ENCODE measurements at regions of chr19 and their contacts with region 1.

Region 1: DNA sequence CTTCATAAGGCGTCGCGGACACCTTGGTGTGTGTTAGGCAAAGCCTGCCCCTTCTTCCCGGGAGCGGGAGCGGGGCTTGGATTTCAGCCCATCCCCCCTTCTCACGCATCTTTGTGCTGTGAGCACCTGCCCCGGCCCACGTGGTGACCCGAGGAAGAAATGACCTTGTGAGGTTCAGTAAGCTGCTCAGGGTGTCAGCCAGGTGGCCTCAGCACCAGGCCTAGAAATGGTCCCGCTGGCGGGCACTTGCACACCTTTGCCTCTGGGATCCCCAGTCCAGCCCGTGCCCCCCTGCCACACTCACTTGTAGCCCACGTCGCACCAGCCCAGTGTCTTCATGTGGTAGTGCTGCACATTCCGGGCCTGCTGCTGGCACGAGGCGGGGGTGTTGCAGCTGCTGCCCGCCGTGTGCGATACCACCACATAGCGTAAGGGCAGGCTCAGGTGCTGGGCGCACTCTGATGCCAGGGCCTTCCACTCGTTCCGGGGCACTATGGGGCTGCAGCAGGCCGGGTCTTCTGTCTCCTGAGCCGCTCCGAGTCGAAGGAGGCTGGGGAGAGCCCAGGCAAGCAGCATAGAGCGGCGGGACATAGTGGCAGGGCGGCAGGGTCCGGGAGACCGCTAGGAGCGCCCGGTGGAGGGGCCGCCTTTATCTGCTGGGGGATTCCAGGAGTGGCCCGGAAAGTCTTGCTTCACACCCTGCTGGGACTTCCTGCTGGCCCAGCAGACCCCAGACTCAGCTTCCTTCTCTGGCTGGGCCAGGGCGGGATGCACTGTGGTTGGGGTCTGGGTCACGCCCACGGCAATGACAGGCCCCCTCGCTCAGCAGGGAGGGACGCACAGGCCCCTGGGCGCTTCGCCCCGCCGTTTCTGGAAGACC is at the start of gene PGLYRP1:
- DNase-seq: no peak
- H3K4me3 ChIP-seq: no peak within 1 kb of the TSS
- H3K27ac ChIP-seq: no peak within 1 kb of the TSS
- H3K27me3 ChIP-seq: peaks cover 23% of the 10 kb centered on the region
- CTCF ChIP-seq: no peak
- polyA plus RNA-seq, gene PGLYRP1: not detected in 2 replicates

Region 2: GRCh38 chr19:45985321-45985720 is 37.4 kb before region 1 on chr19:
- CTCF ChIA-PET with region 1: no interaction called
- POLR2A ChIA-PET with region 1: no interaction called
- DNase-seq: no peak
- H3K4me3 ChIP-seq: no peak overlapping the region
- H3K27ac ChIP-seq: no peak overlapping the region
- H3K27me3 ChIP-seq: peaks cover 16% of the 10 kb centered on the region
- CTCF ChIP-seq: no peak

Region 3: GRCh38 chr19:46040952-46041500 is 18.4 kb after region 1 on chr19 and contains the start of gene IGFL4:
- CTCF ChIA-PET with region 1: interaction called, 16 read pairs
- POLR2A ChIA-PET with region 1: no interaction called
- DNase-seq: no peak
- H3K4me3 ChIP-seq: no peak within 1 kb of the TSS
- H3K27ac ChIP-seq: no peak within 1 kb of the TSS
- H3K27me3 ChIP-seq: peaks cover 52% of the 10 kb centered on the region
- CTCF ChIP-seq: no peak
- polyA plus RNA-seq, gene IGFL4: not detected in 2 replicates

Region 4: DNA sequence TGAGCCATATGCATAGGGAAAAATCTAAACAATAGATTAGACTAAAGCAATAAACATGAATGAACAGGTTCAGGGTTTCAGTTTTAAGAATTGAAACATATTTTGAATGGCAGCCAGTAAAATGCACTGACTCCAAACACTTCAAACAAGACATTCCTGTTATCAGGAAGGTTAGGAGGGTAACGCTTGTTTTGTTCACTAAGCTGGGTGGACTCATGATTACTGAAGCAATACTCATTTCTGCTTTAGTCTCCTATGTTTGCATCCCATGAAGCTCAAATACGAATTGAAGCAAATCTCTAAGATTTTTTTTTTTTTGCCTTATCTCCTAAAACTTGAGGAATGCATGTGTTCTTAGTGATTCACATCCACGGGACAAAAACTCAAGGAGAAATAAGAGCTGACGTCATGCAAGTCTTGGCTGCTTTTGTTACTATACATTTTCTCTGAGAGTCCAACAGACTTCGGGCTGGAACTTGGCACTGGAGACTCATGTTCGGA is 47.2 kb after region 1 on chr19:
- CTCF ChIA-PET with region 1: interaction called, 29 read pairs
- POLR2A ChIA-PET with region 1: no interaction called
- DNase-seq: peak; percentile 74
- H3K4me3 ChIP-seq: no peak overlapping the region
- H3K27ac ChIP-seq: peak overlapping the region; percentile 57
- H3K27me3 ChIP-seq: peaks cover 38% of the 10 kb centered on the region
- CTCF ChIP-seq: no peak

Region 5: DNA sequence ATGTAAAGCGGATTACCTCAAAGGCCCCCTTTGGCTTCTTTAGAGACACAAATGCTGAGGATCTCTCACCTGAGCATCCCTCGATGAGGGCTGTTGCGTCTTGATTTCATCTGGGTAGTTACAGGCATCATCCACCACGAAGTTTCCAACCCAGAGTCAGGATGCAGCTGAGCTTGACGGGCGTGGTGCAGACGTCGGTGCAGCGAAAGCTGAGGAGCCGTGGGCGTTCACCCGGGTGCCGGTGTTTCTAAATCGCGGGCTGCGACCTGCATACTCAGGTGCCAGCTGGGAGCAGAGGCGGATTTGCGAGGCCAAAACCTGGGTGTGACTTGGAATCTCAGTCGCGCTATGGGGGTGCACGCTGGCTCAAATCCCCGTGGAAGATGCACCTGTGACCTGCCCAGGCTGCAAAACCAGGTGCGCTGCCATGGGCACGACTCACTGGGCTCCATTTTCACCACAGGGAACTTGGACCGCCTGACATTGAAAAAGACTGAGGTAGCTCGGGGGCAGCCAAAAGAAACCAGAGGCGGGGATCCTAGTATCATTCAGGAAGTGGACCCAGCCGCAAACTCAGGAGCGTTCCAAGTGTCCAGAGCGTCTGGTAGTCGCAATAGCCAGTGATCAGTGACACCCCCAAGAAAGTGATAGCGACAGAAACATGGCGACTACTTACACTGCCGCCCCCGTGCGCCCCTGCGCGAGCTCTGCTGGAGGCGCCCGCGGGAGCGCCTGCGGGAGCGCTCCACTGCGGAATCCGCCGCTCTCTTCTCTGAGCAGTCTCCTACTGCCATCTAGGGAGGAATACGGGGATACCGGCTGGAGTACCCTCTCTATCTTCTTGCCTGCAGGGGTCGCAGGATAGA is 54.5 kb after region 1 on chr19:
- CTCF ChIA-PET with region 1: interaction called, 196 read pairs
- POLR2A ChIA-PET with region 1: no interaction called
- DNase-seq: peak; percentile 56
- H3K4me3 ChIP-seq: peak overlapping the region; percentile 44
- H3K27ac ChIP-seq: no peak overlapping the region
- H3K27me3 ChIP-seq: peaks cover 53% of the 10 kb centered on the region
- CTCF ChIP-seq: peak; percentile 100

Region 6: DNA sequence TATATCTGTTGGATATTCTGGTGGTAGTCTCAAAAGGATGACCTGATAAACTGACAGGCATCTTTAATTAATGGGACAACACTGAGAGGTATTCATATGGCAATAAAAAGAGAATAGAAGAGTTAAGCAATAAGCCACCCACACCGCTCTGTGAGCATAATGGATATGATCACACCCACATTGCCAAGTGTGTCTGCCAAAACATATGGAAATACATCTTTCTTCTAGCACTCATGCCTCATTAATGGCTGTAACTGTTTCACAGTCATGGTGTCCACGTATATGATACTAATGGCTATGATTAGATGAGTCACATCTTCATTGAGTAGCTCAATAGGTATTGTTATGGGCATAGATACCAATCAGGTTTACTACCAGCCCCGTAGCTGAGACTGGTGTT is 88.7 kb after region 1 on chr19:
- CTCF ChIA-PET with region 1: no interaction called
- POLR2A ChIA-PET with region 1: no interaction called
- DNase-seq: no peak
- H3K4me3 ChIP-seq: no peak overlapping the region
- H3K27ac ChIP-seq: no peak overlapping the region
- H3K27me3 ChIP-seq: peaks cover 41% of the 10 kb centered on the region
- CTCF ChIP-seq: no peak

Region 7: DNA sequence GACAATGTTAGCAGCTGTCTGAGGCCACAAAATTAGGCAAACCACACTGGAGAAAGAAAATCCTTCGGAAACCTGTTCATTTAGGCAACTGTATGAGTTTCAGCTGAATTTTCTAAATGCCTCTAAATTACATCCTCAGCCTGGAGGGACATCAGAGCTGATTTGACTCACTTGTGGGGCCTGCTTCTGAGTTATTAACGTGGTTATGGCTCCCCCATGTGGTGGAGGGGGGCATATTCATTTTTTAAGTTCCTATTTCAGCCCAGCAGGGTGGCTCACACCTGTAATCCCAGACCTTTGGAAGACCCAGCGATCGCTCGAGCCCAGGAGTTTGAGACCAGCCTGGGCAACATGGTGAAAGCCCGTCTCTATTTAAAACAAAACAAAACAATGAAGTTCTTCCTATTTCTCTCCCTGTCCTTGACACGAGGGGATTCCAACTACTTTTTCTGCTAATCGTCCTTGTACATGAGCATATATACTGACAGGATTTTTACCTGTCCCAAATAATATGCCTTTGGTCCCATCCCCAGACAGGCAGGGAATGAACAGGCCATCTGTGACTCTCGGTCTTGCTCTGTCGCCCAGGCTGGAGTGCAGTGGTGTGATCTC is 242.7 kb after region 1 on chr19:
- CTCF ChIA-PET with region 1: interaction called, 54 read pairs
- POLR2A ChIA-PET with region 1: no interaction called
- DNase-seq: peak; percentile 57
- H3K4me3 ChIP-seq: no peak overlapping the region
- H3K27ac ChIP-seq: no peak overlapping the region
- H3K27me3 ChIP-seq: peaks cover 35% of the 10 kb centered on the region
- CTCF ChIP-seq: peak; percentile 78